GM13977 (cell line): ENCODE measurements at regions of chr17 and their contacts with region 1.

Region 1: DNA sequence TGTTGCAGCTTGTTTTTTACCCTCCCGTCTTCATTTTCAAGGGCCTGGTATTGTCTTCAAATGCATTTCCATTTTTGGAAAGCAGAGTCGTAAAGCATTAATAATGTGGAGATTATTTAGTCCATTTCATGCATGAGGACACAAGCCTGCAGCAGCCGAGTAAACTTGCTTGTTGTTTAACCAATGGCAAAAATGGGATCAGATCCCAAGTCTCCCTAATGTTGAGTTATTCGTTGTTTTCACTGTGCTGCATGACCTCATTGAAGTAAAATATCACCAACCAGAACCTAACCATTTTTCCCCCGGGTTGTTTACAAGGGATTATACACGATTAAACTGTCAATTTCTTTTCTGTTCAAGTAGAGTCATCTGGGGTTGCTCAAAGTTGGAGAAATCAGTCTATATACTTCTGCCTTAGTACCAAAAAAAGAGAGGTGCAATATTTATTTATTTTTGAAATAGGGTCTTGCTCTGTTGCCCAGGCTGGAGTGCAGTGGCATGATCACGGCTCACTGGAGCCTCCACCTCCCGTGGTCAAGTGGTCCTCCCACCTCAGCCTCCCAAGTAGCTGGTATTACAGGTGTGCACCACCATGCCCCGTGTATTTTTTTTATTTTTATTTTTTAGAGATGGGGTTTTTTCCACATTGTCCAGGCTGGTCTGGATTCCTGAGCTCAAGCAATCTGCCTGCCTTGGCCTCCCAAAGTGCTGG is 12.4 kb downstream of the AMZ2 start:
- DNase-seq: no peak
- CTCF ChIP-seq: no peak

Region 2: DNA sequence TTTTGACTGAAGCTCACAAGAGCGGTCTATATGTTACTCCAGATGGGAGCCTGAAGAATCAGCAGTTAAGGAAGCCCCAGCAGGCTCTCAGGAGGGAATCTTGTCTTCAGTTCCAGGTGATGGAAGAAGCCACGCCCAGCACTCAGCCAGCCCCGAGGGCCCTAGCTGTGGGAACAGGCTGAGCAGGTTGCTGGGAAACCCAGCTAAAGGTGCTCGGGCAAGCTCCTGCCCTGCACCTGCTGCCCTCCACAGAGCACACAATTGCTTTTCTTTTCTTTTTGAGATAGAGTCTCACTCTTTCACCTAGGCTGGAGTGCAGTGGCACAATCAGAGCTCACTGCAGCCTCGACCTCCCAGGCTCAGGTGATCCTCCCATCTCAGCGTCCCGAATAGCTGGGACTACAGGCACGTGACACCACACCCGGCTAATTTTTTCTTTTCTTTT is 164.8 kb after region 1 on chr17:
- in situ Hi-C with region 1: loop called (anchors 10 kb)
- DNase-seq: no peak
- CTCF ChIP-seq: no peak

Region 3: GRCh38 chr17:68457539-68458259 is 197.5 kb after region 1 on chr17:
- in situ Hi-C with region 1: loop called (anchors 10 kb)
- DNase-seq: peak; percentile 98
- CTCF ChIP-seq: no peak